ENCODE measurements at regions of chr5 and their contacts with region 1.

Region 1: GRCh38 chr5:139177809-139178588 is 20.2 kb downstream of the SIL1 start:
- DNase-seq: peak; percentile 92 to 98
- ATAC-seq: peak; percentile 89
- H3K4me3 ChIP-seq: no peak overlapping the region
- H3K27ac ChIP-seq: peak overlapping the region; percentile 91 to 96 (median 93)
- H3K4me1 ChIP-seq: peaks cover 56 to 57% of the 10 kb centered on the region in 2 donors
- H3K27me3 ChIP-seq: no peaks in the 10 kb centered on the region
- CTCF ChIP-seq: no peak
- POLR2A ChIP-seq: peak in 1 of 2 donors; percentile 23

Region 2: DNA sequence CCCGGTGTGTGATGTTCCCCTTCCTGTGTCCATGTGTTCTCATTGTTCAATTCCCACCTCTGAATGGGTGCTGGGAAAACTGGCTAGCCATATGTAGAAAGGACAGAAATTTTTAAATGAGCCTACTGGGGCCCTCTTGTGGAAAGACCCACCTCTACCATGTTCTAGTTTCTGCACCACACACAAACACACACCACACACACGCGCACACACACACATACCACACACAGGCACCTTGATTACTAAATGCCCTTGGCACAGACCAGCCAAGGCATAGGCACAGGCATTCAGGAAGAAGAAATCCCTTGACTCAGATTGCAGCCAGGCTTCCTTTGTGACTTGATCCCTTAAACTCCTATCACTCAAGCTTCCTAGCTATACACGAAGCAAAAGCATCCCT is 40.3 kb before region 1 on chr5:
- in situ Hi-C with region 1: no loop called
- intact Hi-C with region 1: loop called (anchors 2 kb)
- DNase-seq: peak; percentile 62 to 68
- ATAC-seq: peak; percentile 55 to 67
- H3K4me3 ChIP-seq: no peak overlapping the region
- H3K27ac ChIP-seq: peak overlapping the region; percentile 75 to 85 (median 83)
- H3K4me1 ChIP-seq: peaks cover 73 to 84% of the 10 kb centered on the region in 2 donors
- H3K27me3 ChIP-seq: no peaks in the 10 kb centered on the region
- CTCF ChIP-seq: peak in 2 of 5 experiments; percentile 31 to 34
- POLR2A ChIP-seq: no peak

Region 3: DNA sequence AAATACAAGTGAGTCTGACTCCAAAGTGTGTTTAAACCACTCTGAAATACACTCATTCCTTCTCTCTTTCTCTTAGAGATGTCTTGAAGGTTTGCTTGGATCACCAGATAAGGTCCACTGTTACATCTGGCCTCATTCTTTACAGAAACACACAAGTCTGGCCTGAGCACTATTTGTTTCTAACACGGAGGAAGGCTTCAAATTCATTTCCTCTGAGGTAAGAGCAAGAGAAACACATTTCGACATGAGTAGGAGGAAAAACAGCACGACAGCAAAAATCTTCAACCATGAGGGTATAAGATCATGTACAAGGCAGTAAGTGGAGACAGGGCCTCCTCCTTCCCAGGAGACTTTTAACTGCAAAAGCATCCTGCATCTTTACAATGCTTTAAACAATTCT is 12.1 kb after region 1 on chr5:
- in situ Hi-C with region 1: no loop called
- intact Hi-C with region 1: no loop called
- DNase-seq: no peak
- ATAC-seq: no peak
- H3K4me3 ChIP-seq: no peak overlapping the region
- H3K27ac ChIP-seq: peak overlapping the region in 3 of 4 donors; percentile 12 to 57 (median 12)
- H3K4me1 ChIP-seq: peaks cover 12 to 18% of the 10 kb centered on the region in 2 donors
- H3K27me3 ChIP-seq: no peaks in the 10 kb centered on the region
- CTCF ChIP-seq: no peak
- POLR2A ChIP-seq: no peak

Measured in gastrocnemius medialis (tissue), 4 donors.